WTC11 (cell line): ENCODE measurements at regions of chr12 and their contacts with region 1.

Region 1: DNA sequence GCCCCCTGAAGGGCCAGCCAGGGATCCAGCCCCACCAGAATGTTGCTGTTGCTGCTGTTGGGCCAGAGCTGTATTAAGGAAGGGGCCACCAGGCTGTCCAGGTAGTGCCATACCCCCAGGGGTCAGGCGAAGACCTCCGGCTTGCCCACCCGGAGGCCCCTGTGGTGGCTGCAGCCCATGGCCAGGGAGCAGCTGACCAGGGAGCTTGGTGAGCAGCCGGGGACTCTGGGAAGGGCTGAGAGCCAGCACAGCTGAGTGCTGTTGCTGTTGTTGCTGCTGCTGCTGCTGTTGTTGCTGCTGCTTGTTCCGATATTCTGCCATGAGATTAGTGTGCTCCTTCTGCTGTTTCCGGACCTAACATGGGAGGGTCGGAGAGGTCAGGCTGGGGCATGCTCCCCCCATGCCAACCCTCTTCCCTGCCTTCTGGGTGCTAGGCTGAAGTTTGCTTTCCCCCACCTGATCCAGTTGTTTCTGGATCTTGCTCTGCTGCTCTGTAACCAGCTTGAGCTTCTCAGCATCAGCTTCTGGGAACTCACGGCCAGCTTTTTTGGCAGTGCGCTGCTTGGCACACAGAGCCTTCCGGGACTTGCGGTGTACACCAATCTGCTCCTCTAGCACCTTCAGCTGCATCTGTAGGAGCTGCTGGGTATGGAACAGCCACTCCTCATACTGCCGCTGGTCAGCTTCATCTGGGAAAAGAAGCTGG is 15.2 kb upstream of the PRKAG1 start:
- DNase-seq: no peak
- ATAC-seq: no peak
- H3K4me3 Mint-ChIP-seq: no peak overlapping the region
- H3K27ac Mint-ChIP-seq: no peak overlapping the region
- H3K4me1 Mint-ChIP-seq: no peaks in the 10 kb centered on the region
- H3K27me3 Mint-ChIP-seq: no peaks in the 10 kb centered on the region
- CTCF ChIP-seq: no peak

Region 2: DNA sequence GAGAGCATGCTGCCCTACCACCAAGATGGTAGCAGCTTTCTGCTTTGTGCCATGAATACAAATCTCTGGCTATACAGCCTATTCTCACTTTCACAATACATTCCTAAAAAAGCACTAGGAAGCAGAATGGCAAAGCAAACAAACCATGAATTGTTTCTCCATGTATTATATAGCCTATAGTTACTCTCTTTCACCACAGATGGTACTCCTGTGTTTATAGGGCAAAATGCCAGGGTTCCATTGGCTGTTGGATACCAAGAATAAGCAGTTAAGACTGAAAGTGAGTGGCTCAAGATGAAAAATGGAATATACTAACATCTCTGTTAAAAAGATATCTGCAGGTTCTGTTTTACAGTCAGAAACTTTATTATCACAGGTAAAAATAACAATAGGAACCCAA is 87.6 kb before region 1 on chr12:
- CTCF ChIA-PET with region 1: no interaction called
- POLR2A ChIA-PET with region 1: no interaction called
- DNase-seq: no peak
- ATAC-seq: no peak
- H3K4me3 Mint-ChIP-seq: no peak overlapping the region
- H3K27ac Mint-ChIP-seq: peak overlapping the region; percentile 92; the same call in 1 of the 2 replicates
- H3K4me1 Mint-ChIP-seq: peaks cover 12% of the 10 kb centered on the region
- H3K27me3 Mint-ChIP-seq: no peaks in the 10 kb centered on the region
- CTCF ChIP-seq: no peak

Region 3: GRCh38 chr12:49018261-49019119 is 15.3 kb before region 1 on chr12 and contains the start of gene PRKAG1:
- CTCF ChIA-PET with region 1: interaction called, 11 read pairs
- POLR2A ChIA-PET with region 1: interaction called, 4 read pairs
- DNase-seq: peak; percentile 97
- ATAC-seq: peak; percentile 94
- H3K4me3 Mint-ChIP-seq: peak within 1 kb of the TSS; percentile 91
- H3K27ac Mint-ChIP-seq: peak within 1 kb of the TSS; percentile 99
- H3K4me1 Mint-ChIP-seq: peaks cover 16% of the 10 kb centered on the region
- H3K27me3 Mint-ChIP-seq: peaks cover 6% of the 10 kb centered on the region
- CTCF ChIP-seq: no peak
- total RNA-seq, gene PRKAG1: 37.9 to 41.6 TPM (median 38.0 TPM) in 3 replicates